CD8-positive, alpha-beta T cell (primary cell): ENCODE measurements at regions of chr17 and their contacts with region 1.

Region 1: DNA sequence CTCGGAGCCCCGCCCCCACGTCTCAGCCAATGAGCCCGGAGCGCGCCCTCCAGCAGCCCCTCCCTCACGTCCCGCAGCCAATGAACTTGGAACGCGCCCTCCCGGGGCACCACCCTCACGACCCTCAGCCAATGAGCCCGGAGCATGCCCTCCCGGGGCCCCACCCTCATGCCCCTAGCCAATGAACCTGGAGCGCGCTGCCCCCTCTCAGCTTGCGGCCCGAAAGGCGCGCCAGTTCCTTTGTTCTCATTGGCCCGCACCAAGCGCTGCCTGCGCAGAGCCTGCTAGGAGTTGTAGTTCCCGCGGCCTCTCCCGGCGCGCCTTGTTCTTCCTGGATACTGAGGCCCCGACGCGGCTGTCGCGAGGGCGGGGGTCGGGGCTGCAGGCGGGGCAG is at the start of gene LRRC45:
- DNase-seq: peak; percentile 100
- ATAC-seq: peak; percentile 95
- H3K4me3 ChIP-seq: peak within 1 kb of the TSS; percentile 69 to 90
- H3K4me3 Mint-ChIP-seq: peak within 1 kb of the TSS; percentile 84
- H3K27ac ChIP-seq: peak within 1 kb of the TSS; percentile 42 to 60
- H3K27ac Mint-ChIP-seq: no peak within 1 kb of the TSS
- H3K4me1 ChIP-seq: peaks cover 31% of the 10 kb centered on the region
- H3K4me1 Mint-ChIP-seq: peaks cover 23% of the 10 kb centered on the region
- H3K27me3 ChIP-seq: no peaks in the 10 kb centered on the region
- H3K27me3 Mint-ChIP-seq: no peaks in the 10 kb centered on the region
- CTCF ChIP-seq: no peak
- total RNA-seq, gene LRRC45: 5.1 to 5.6 TPM

Region 2: DNA sequence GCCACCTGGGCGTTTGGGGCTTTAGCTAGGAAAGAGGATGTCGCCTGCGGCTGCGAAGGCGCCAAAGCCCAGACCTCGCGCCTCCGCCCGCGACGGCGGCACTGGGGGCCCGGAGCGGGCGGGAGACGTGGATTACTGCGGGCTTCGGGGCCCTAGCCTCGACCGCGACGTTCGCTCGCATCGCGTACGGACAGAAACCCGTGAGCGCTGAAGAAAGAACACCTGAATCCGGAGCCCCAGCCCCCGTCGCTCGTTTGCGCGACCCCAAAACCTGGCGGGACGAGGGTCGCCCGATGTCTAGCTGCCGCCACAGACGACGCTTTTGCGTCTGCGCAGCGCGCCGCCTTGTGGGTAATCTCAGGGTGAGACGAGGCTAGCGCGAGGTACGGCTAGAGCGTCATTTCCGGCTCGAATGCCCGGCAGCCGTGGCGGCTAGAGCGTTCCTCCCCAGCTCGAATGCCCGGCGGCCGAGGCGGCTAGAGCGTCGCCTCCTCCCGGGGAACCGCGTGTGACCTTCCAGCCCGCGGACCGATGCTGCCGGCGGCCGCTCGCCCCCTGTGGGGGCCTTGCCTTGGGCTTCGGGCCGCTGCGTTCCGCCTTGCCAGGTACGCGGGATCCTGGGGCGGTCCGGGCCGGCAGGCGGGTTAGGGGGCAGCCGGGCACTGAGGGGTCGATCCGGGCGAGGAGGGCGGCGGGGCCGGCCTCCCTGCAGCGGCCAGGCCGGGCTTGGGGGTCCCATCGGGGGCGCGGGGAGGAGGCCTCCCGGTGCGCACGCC is 319.8 kb before region 1 on chr17 and contains the start of gene MRPL12:
- CTCF ChIA-PET with region 1: no interaction called
- POLR2A ChIA-PET with region 1: no interaction called
- intact Hi-C with region 1: loop called in 1 of 2 experiments (anchors 1 kb)
- DNase-seq: peak; percentile 73 to 95 (median 90)
- ATAC-seq: peak; percentile 87
- H3K4me3 ChIP-seq: peak within 1 kb of the TSS; percentile 79 to 84
- H3K4me3 Mint-ChIP-seq: peak within 1 kb of the TSS; percentile 87
- H3K27ac ChIP-seq: peak within 1 kb of the TSS; percentile 96 to 97
- H3K27ac Mint-ChIP-seq: peak within 1 kb of the TSS; percentile 94
- H3K4me1 ChIP-seq: peaks cover 29% of the 10 kb centered on the region
- H3K4me1 Mint-ChIP-seq: peaks cover 31% of the 10 kb centered on the region
- H3K27me3 ChIP-seq: no peaks in the 10 kb centered on the region
- H3K27me3 Mint-ChIP-seq: no peaks in the 10 kb centered on the region
- CTCF ChIP-seq: no peak
- total RNA-seq, gene MRPL12: 33.2 to 36.6 TPM

Region 3: DNA sequence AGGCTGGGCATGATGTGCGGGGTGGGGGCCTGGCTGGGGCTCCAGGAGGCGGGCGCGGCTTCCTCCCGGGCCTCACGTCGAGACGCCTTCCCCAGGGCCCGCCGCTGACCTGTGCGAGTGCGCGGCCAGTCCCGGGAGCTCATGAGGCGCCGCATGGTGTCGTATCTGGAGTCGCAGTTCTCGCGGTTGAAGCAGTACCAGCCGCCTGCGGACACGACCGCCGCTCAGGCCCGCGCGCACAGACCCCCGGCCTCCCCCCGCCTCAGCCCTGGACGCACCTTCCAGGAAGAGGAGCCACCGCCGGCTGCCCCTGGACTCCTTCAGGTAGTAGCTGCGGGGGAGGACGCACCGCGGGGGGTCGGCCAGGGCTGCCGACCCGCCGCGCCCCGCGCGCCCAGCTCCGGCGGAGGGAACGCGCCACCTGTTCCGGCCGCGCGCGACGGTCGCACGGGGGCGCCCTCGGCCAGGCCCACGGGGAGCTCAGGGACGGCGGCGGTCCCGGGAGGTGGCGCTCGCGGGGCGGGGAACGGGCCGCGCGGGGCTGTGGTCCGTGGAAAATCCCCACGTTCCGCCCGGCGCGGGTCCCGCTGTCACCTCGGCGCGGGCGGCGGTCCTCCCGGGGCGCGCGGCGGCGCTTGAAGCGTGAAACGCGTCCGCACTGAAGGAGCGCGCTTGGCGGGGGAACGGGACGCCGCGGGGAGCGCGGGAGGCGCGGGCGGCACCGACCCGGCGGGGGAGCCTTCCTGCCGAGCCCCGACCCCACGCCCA is 63.4 kb before region 1 on chr17:
- CTCF ChIA-PET with region 1: interaction called, 220 read pairs
- POLR2A ChIA-PET with region 1: interaction called, 26 read pairs
- intact Hi-C with region 1: loop called (anchors 1 kb)
- DNase-seq: peak; percentile 71 to 92 (median 81)
- ATAC-seq: peak; percentile 93
- H3K4me3 ChIP-seq: peak overlapping the region; percentile 8 to 35
- H3K4me3 Mint-ChIP-seq: peak overlapping the region; percentile 15
- H3K27ac ChIP-seq: no peak overlapping the region
- H3K27ac Mint-ChIP-seq: no peak overlapping the region
- H3K4me1 ChIP-seq: peaks cover 6% of the 10 kb centered on the region
- H3K4me1 Mint-ChIP-seq: peaks cover 10% of the 10 kb centered on the region
- H3K27me3 ChIP-seq: peaks cover 6 to 22% of the 10 kb centered on the region in 2 experiments
- H3K27me3 Mint-ChIP-seq: peaks cover 13% of the 10 kb centered on the region
- CTCF ChIP-seq: peak; percentile 90

Region 4: GRCh38 chr17:82037113-82037888 is 14.3 kb after region 1 on chr17 and contains the start of gene DCXR:
- CTCF ChIA-PET with region 1: interaction called, 7 read pairs
- POLR2A ChIA-PET with region 1: interaction called, 21 read pairs
- intact Hi-C with region 1: loop called (anchors 1 kb)
- DNase-seq: peak; percentile 82 to 98 (median 95)
- ATAC-seq: peak; percentile 93
- H3K4me3 ChIP-seq: peak within 1 kb of the TSS; percentile 68 to 73
- H3K4me3 Mint-ChIP-seq: peak within 1 kb of the TSS; percentile 87
- H3K27ac ChIP-seq: peak within 1 kb of the TSS; percentile 58 to 80
- H3K27ac Mint-ChIP-seq: peak within 1 kb of the TSS; percentile 87
- H3K4me1 ChIP-seq: peaks cover 14% of the 10 kb centered on the region
- H3K4me1 Mint-ChIP-seq: peaks cover 26% of the 10 kb centered on the region
- H3K27me3 ChIP-seq: no peaks in the 10 kb centered on the region
- H3K27me3 Mint-ChIP-seq: no peaks in the 10 kb centered on the region
- CTCF ChIP-seq: peak; percentile 82
- total RNA-seq, gene DCXR: 71.7 to 77.7 TPM

Region 5: GRCh38 chr17:82129095-82129494 is 106.1 kb after region 1 on chr17:
- CTCF ChIA-PET with region 1: interaction called, 4 read pairs
- POLR2A ChIA-PET with region 1: no interaction called
- intact Hi-C with region 1: loop called in 1 of 2 experiments (anchors 1 kb)
- DNase-seq: no peak
- ATAC-seq: no peak
- H3K4me3 ChIP-seq: no peak overlapping the region
- H3K4me3 Mint-ChIP-seq: no peak overlapping the region
- H3K27ac ChIP-seq: no peak overlapping the region
- H3K27ac Mint-ChIP-seq: peak overlapping the region; percentile 98
- H3K4me1 ChIP-seq: peaks cover 46% of the 10 kb centered on the region
- H3K4me1 Mint-ChIP-seq: peaks cover 47% of the 10 kb centered on the region
- H3K27me3 ChIP-seq: no peaks in the 10 kb centered on the region
- H3K27me3 Mint-ChIP-seq: no peaks in the 10 kb centered on the region
- CTCF ChIP-seq: no peak

Region 6: DNA sequence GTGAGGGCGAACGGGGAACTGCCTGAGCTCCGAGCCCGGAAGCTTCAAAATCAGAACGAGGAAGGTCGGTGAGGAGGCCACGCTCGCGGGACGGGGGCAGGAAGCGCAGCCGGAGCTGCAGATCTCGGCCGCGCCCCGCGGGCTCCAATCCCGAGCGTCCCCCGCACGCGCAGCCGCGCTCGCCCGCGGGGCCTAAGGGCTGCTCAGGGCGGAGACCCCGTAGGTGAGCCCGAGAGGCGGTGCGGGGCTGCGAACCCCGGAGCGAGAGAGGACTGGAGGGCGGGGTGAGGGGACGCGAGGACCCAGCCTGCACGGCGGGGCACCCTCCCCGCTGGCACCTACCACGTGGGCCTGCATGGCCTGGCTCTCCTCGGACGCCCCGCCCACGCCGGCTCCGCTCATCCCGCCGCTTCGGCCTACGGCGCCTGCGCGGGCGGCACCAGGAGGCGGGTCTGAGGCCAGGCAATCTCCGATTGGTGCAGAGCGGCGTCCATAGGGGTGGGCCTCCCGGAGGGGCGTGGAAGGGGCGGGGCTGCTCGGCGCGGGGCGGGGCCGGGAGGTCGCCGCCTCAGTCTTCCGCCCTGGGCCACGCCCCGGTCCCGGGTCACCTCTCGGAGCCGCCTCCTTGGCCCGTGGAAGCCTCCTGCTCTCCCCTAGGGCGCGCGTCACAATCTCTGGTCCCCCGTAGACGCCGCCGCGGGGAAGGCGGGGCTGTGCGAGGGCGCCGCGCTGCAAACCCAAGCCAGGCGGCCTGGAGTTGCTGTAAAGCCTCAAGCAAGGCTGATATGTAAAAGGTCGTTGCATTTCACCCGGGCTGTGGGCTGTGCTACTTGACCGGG is 1028.6 kb after region 1 on chr17:
- CTCF ChIA-PET with region 1: no interaction called
- POLR2A ChIA-PET with region 1: no interaction called
- intact Hi-C with region 1: loop called in 1 of 2 experiments (anchors 5 kb)
- DNase-seq: peak; percentile 95 to 99 (median 99)
- ATAC-seq: peak; percentile 85
- H3K4me3 ChIP-seq: peak overlapping the region; percentile 49 to 68
- H3K4me3 Mint-ChIP-seq: peak overlapping the region; percentile 86
- H3K27ac ChIP-seq: peak overlapping the region; percentile 75 to 87
- H3K27ac Mint-ChIP-seq: peak overlapping the region; percentile 94
- H3K4me1 ChIP-seq: peaks cover 40% of the 10 kb centered on the region
- H3K4me1 Mint-ChIP-seq: peaks cover 40% of the 10 kb centered on the region
- H3K27me3 ChIP-seq: no peaks in the 10 kb centered on the region
- H3K27me3 Mint-ChIP-seq: no peaks in the 10 kb centered on the region
- CTCF ChIP-seq: no peak